A549 (cell line): ENCODE measurements at regions of chr20 and their contacts with region 1.

Region 1: DNA sequence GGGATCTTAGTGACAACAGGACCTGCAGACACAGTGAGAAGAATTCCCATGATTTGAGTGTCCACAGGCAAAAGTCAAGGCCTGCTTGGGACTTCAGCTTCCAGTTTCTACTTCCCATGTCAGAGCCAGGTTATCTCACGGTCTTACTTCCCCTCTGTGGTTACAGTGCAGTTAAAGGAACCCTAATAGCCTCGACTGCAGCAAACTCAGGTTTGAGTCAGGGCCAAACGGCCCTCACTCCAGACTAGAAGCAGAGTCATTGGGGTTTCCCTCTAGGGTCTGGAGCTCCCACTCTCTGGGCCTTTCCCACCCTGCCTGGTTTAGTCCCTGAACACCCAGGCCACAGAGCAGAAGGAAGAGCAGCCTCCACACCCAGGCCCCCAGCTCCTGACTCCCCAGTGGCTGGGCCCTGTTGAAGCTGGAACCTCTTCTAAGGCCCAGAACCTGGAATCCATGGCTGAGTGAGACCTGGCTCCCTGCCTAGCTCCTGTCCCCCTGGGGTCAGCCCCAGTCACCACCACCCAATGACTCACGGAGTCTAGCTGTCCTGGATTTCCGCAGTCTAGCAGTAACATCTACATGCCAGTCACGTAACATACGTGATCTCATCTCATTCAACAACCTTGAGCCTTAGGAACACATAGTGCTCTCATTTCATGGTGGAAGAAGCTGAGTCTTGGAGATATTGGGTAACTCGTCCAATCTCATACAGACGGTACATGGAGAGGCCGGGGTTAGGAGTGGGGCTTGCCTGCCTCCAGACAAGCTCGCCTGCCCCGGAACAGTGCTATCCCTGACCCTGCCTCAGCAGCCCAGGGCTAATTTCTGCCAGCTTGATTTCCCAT is 9.2 kb upstream of the GHRH start:
- DNase-seq: no peak
- ATAC-seq: 0 out of 6 replicates have a peak, but pooled peaks of 1 of the 2 experiments have one; percentile 8
- H3K4me3 ChIP-seq: no peak overlapping the region
- H3K27ac ChIP-seq: peak overlapping the region; percentile 51 to 76; a peak in 4 of 6 replicates
- H3K4me1 ChIP-seq: peaks cover 5% of the 10 kb centered on the region; the same call in 2 of the 3 replicates
- CTCF ChIP-seq: no peak
- EP300 ChIP-seq: no peak
- POLR2A ChIP-seq: no peak
- RAD21 ChIP-seq: no peak

Region 2: GRCh38 chr20:36932476-36933426 is 338.0 kb before region 1 on chr20:
- CTCF ChIA-PET with region 1: no interaction called
- POLR2A ChIA-PET with region 1: no interaction called
- DNase-seq: no peak
- ATAC-seq: no peak
- H3K4me3 ChIP-seq: no peak overlapping the region
- H3K27ac ChIP-seq: no peak overlapping the region
- H3K4me1 ChIP-seq: peaks cover 4% of the 10 kb centered on the region; the same call in 1 of the 3 replicates
- CTCF ChIP-seq: no peak
- EP300 ChIP-seq: no peak
- POLR2A ChIP-seq: no peak
- RAD21 ChIP-seq: no peak

Region 3: DNA sequence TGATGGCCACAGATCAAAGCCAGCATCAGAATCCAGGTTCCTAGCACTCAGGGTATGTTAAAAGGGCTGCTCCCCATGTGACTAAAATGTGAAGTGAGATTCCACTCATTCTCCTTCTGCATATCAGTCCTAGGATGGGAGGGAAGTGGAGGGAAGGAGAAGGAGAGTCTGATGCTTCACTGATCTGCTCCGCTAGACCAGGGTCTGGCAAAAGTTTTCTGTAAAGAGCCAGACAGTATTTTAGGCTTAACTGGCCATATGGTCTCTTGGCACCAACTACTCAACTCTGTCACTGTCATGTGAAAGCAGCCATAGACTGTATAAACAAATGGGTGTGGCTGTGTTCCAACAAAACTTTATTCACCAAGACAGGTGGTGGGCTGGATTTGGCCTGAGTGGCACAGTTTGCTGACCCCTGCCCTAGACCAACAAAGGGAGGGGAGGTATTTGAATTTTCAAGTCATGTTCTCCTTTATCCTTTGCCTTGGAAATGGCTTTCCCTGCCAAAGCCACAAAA is 31.8 kb before region 1 on chr20:
- CTCF ChIA-PET with region 1: interaction called, 17 read pairs
- POLR2A ChIA-PET with region 1: no interaction called
- DNase-seq: no peak
- ATAC-seq: no peak
- H3K4me3 ChIP-seq: no peak overlapping the region
- H3K27ac ChIP-seq: no peak overlapping the region
- H3K4me1 ChIP-seq: no peaks in the 10 kb centered on the region
- CTCF ChIP-seq: no peak
- EP300 ChIP-seq: no peak
- POLR2A ChIP-seq: no peak
- RAD21 ChIP-seq: no peak

Region 4: GRCh38 chr20:37288091-37288490 is 17.3 kb after region 1 on chr20:
- CTCF ChIA-PET with region 1: interaction called, 104 read pairs
- POLR2A ChIA-PET with region 1: no interaction called
- DNase-seq: no peak
- ATAC-seq: no peak
- H3K4me3 ChIP-seq: no peak overlapping the region
- H3K27ac ChIP-seq: no peak overlapping the region; a peak in 1 of 6 replicates
- H3K4me1 ChIP-seq: peaks cover 17% of the 10 kb centered on the region
- CTCF ChIP-seq: no peak
- EP300 ChIP-seq: no peak
- POLR2A ChIP-seq: no peak
- RAD21 ChIP-seq: no peak

Region 5: GRCh38 chr20:37392421-37393178 is 121.8 kb after region 1 on chr20:
- CTCF ChIA-PET with region 1: interaction called, 16 read pairs
- POLR2A ChIA-PET with region 1: no interaction called
- DNase-seq: peak in 1 of 2 experiments; percentile 84
- ATAC-seq: peak; percentile 11 to 25; a peak in 3 of 6 replicates
- H3K4me3 ChIP-seq: no peak overlapping the region
- H3K27ac ChIP-seq: peak overlapping the region; percentile 69 to 84; a peak in 5 of 6 replicates
- H3K4me1 ChIP-seq: peaks cover 93% of the 10 kb centered on the region
- CTCF ChIP-seq: peak; percentile 35; the same call in 2 of the 3 replicates
- EP300 ChIP-seq: no peak
- POLR2A ChIP-seq: no peak
- RAD21 ChIP-seq: peak; percentile 16 to 30; a peak in 2 of 5 replicates

Region 6: DNA sequence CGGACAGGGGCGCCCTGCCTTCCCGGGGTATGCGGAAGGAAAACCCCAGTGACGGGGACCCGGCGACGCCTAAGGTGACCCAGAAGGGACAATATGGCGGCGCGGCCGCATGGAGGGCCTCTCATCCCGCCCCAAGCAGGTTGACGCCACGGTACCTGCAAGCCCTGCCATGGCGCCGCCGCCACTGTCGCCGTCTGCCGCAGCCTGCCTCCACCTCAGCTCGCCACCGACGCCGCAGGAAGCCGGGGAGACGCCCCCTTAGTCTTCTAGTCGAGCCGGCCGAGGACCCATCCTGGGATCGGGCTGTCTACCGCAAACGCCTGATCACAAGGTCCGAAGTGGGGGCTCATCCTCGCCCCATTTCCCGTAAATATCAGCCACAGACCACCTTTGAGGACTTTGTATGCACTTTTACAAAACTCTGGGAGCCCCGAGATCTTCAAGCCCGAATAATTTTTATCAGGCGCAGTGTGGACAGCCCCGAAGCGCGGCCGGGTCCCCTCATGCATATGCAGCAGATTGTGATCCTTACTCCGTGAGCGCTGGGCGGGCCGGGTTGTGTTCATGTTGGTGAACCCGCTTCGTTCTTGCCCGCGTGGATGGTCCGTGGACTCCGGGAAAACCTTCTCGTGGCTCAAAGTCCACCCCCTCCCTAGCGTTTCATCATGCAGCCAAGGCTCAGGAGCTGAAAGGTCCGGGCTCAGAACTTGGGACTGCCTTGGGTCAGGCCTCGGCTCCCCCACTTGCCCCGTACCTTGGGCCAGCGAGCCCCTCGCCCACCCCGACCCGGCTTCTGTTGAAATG is 257.0 kb after region 1 on chr20 and contains the start of gene BLCAP:
- CTCF ChIA-PET with region 1: interaction called, 150 read pairs
- POLR2A ChIA-PET with region 1: no interaction called
- DNase-seq: peak; percentile 90 to 97
- ATAC-seq: peak; percentile 92 to 95
- H3K4me3 ChIP-seq: peak within 1 kb of the TSS; percentile 100
- H3K27ac ChIP-seq: peak within 1 kb of the TSS; percentile 96 to 99
- H3K4me1 ChIP-seq: peaks cover 30% of the 10 kb centered on the region
- CTCF ChIP-seq: no peak
- EP300 ChIP-seq: no peak
- POLR2A ChIP-seq: peak; percentile 81
- RAD21 ChIP-seq: no peak
- polyA plus RNA-seq, gene BLCAP: 48.3 and 49.0 TPM in 2 replicates

Region 7: DNA sequence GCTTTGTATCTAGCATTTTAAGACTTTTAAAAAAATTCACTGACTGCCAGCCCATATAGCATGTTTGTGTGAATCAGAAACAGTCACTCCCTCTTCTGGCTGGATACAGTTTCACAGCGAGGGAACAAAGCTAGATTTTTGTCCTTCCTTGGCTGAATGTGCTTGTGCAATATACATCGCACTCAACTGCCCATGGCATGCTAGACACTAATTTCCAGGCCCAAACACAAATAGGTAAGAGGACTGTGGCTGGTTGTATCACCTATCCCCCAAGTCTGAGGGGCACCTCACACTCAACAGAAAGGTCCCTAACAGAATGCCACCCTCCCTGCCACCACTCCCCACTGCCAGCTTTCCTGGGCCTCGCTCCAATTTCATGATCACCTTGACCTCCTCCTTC is 273.0 kb after region 1 on chr20:
- CTCF ChIA-PET with region 1: interaction called, 29 read pairs
- POLR2A ChIA-PET with region 1: no interaction called
- DNase-seq: peak; percentile 42 to 51
- ATAC-seq: peak; percentile 87
- H3K4me3 ChIP-seq: no peak overlapping the region
- H3K27ac ChIP-seq: no peak overlapping the region
- H3K4me1 ChIP-seq: peaks cover 6% of the 10 kb centered on the region; the same call in 1 of the 3 replicates
- CTCF ChIP-seq: peak; percentile 32; the same call in 2 of the 3 replicates
- EP300 ChIP-seq: no peak
- POLR2A ChIP-seq: no peak
- RAD21 ChIP-seq: 0 out of 5 replicates have a peak, but pooled peaks of 1 of the 2 experiments have one; percentile 26